ENCODE measurements at regions of chr11 and their contacts with region 1.

Region 1: DNA sequence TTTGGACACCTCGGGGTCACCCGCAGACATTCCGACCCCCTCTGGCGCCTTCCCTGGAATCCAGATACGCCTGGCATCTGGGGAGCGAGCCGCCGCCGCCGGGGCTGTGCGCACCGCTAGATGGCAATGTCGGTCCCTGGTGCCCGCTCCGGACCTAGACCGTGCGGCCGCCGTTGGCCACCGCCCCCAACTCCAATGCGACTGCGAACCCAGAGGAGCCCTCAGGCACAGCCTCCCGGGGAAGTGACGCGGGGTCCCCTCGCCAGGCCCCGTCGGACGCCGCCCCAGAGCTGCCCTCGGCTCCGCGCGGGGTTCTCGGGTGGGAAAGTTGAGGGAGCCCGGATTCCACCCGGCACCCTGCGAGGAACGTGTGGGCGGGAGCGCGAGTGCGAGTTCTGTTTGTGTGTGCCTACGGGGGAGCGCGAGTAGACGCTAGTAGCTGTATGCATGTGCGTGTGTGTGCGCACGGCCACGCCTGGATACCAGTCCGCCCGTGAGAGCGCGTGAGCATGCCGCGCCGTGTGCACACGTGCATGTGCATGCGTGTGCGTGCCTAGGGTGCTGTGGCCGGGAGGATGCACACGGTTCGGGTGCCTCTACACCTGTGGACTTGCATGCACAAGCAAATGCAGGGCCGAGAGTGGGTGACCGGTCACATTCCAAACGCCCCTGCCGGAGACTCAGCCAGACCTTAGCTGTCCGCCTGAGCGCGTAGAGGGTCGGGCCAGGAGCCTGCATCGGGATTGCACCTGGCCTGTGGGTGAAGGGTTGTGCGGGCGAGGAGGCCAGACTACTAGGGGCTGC is 1.9 kb downstream of the CHRM4 start:
- DNase-seq: peak; percentile 62
- H3K4me3 Mint-ChIP-seq: peak overlapping the region; percentile 30
- H3K27ac Mint-ChIP-seq: no peak overlapping the region
- H3K4me1 Mint-ChIP-seq: peaks cover 38% of the 10 kb centered on the region
- H3K27me3 Mint-ChIP-seq: peaks cover 65% of the 10 kb centered on the region

Region 2: GRCh38 chr11:46352063-46352841 is 37.4 kb before region 1 on chr11:
- CTCF ChIA-PET with region 1: interaction called, 13 read pairs
- POLR2A ChIA-PET with region 1: interaction called, 5 read pairs
- DNase-seq: peak; percentile 80
- H3K4me3 Mint-ChIP-seq: peak overlapping the region; percentile 74
- H3K27ac Mint-ChIP-seq: peak overlapping the region; percentile 73
- H3K4me1 Mint-ChIP-seq: peaks cover 71% of the 10 kb centered on the region
- H3K27me3 Mint-ChIP-seq: no peaks in the 10 kb centered on the region

Region 3: DNA sequence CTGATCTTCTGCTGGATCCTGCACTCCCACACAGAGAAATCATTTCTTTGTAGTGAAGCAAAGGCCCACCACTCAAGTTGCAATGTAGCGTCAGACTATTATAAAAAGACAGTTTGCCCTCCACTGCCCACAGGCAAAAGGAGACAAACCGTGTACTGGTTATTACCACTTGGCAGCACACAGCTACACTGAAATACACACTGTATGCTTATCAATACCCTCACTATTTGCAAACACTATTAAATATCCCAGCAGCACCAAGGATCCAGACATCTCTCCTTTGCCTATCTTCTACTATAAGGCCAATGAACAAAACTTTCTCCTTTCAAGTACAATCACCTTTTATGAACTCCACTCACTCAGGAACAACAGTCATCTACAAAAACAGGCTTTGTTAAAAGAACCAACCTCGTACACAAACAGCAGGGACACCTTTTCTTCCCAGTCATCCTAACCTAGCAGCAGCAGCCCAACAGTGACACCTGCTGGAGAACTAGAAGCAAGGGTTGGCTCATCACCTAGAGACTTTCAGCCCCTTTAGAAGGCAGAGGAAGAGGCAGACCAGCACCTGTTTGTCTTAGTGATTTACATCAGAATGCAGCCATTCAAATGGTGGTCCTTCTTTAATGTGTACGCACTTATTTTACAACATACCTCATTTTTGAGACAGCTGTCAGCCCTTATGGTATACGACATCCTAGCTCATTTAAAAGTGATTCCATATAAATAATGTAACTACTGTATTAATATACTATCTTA is 148.1 kb after region 1 on chr11:
- CTCF ChIA-PET with region 1: interaction called, 10 read pairs
- POLR2A ChIA-PET with region 1: no interaction called
- DNase-seq: peak; percentile 69
- H3K4me3 Mint-ChIP-seq: no peak overlapping the region
- H3K27ac Mint-ChIP-seq: peak overlapping the region; percentile 33
- H3K4me1 Mint-ChIP-seq: peaks cover 4% of the 10 kb centered on the region
- H3K27me3 Mint-ChIP-seq: no peaks in the 10 kb centered on the region

Measured in activated CD4-positive, alpha-beta memory T cell treated with anti-CD3 and anti-CD28 coated beads, Interleukin-2, amount 10 ng/mL, durations not matched to agents 7 days and 5 days (primary cell).